ENCODE measurements at regions of chr5 and their contacts with region 1.

Region 1: DNA sequence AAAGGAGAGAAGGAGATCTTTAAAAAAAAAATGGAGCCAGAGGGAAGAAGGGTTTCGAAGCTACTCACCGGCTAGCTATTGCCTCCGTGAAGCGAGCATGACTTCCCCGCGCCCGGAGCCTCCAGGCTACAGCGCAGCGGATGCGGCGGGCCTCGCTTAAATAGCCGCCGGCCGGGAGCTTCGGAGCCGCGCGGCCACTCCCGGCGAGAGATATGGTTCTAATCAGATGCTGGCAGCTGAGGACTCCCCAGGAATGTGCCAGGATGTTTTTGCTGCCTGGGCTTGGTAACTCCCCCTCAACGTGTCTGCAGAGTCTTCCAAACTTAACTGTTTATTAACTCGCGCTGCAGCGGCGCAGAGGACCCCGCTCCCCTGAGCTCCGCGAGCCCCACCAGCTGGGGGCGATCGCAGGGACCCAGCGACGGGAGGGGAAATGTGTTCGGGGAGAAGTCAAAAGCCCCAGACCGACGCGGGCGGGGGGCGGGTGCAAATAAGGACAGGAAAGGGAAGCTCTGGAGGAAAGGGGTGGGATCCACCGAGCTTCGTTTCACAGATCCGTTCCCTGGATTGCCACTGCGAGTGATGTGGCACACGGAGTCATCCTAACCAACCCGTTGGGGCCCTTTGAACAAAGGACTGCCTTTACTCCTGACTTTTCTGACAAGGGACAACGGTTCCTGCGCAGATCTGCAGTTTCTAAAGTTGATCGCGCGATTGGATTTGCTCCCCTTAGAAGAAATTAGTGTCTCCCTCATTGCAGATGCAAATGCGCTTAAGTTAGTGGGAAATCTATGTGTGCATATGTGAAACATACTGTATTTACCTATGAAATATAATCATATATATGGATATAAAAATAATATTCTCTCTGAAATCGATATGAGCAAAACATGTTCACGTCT is at the start of gene DAB2:
- DNase-seq: peak; percentile 91 to 93
- H3K4me3 ChIP-seq: peak within 1 kb of the TSS; percentile 63
- H3K4me3 Mint-ChIP-seq: peak within 1 kb of the TSS; percentile 71
- H3K27ac Mint-ChIP-seq: peak within 1 kb of the TSS; percentile 89
- H3K4me1 ChIP-seq: peaks cover 75% of the 10 kb centered on the region
- H3K4me1 Mint-ChIP-seq: peaks cover 41% of the 10 kb centered on the region
- H3K27me3 ChIP-seq: no peaks in the 10 kb centered on the region
- H3K27me3 Mint-ChIP-seq: no peaks in the 10 kb centered on the region
- CTCF ChIP-seq: peak; percentile 52 to 86
- total RNA-seq, gene DAB2: 133 and 135 TPM in 2 replicates

Region 2: GRCh38 chr5:39376293-39376714 is 48.7 kb before region 1 on chr5:
- CTCF ChIA-PET with region 1: interaction called, 18 read pairs
- POLR2A ChIA-PET with region 1: no interaction called
- intact Hi-C with region 1: loop called (anchors 1 kb)
- DNase-seq: peak; percentile 51 to 76
- H3K4me3 ChIP-seq: no peak overlapping the region
- H3K4me3 Mint-ChIP-seq: no peak overlapping the region
- H3K27ac Mint-ChIP-seq: no peak overlapping the region
- H3K4me1 ChIP-seq: peaks cover 18% of the 10 kb centered on the region
- H3K4me1 Mint-ChIP-seq: peaks cover 13% of the 10 kb centered on the region
- H3K27me3 ChIP-seq: no peaks in the 10 kb centered on the region
- H3K27me3 Mint-ChIP-seq: no peaks in the 10 kb centered on the region
- CTCF ChIP-seq: peak; percentile 70 to 79

Region 3: DNA sequence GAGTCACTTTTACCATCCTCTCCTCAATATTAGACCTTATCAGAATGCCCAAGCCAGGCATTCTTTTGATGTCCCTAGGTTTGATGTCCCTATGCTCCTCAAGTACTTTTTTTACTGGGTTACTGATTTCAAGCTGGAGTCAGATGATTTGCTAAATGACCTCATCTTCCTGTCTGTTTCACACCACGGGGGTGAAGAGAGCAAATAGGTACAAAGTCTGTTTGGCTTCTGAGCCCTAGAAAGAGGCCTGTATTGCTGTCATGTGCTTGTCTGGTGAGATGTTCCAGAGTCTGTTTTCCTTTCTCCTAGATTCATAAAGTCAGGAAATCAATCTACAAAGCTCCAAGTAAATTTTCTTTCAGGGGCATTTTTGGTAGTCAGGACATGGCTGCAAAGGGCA is 12.5 kb after region 1 on chr5:
- CTCF ChIA-PET with region 1: interaction called, 6 read pairs
- POLR2A ChIA-PET with region 1: interaction called, 8 read pairs
- intact Hi-C with region 1: loop called (anchors 1 kb)
- DNase-seq: peak; percentile 71
- H3K4me3 ChIP-seq: no peak overlapping the region
- H3K4me3 Mint-ChIP-seq: peak overlapping the region; percentile 17
- H3K27ac Mint-ChIP-seq: peak overlapping the region; percentile 56
- H3K4me1 ChIP-seq: peaks cover 53% of the 10 kb centered on the region
- H3K4me1 Mint-ChIP-seq: peaks cover 7% of the 10 kb centered on the region
- H3K27me3 ChIP-seq: no peaks in the 10 kb centered on the region
- H3K27me3 Mint-ChIP-seq: no peaks in the 10 kb centered on the region
- CTCF ChIP-seq: no peak

Region 4: GRCh38 chr5:39520232-39520572 is 95.2 kb after region 1 on chr5:
- CTCF ChIA-PET with region 1: interaction called, 5 read pairs
- POLR2A ChIA-PET with region 1: interaction called, 12 read pairs
- intact Hi-C with region 1: loop called (anchors 5 kb)
- DNase-seq: no peak
- H3K4me3 ChIP-seq: no peak overlapping the region
- H3K4me3 Mint-ChIP-seq: no peak overlapping the region
- H3K27ac Mint-ChIP-seq: no peak overlapping the region
- H3K4me1 ChIP-seq: peaks cover 35% of the 10 kb centered on the region
- H3K4me1 Mint-ChIP-seq: peaks cover 7% of the 10 kb centered on the region
- H3K27me3 ChIP-seq: no peaks in the 10 kb centered on the region
- H3K27me3 Mint-ChIP-seq: no peaks in the 10 kb centered on the region
- CTCF ChIP-seq: no peak

Region 5: DNA sequence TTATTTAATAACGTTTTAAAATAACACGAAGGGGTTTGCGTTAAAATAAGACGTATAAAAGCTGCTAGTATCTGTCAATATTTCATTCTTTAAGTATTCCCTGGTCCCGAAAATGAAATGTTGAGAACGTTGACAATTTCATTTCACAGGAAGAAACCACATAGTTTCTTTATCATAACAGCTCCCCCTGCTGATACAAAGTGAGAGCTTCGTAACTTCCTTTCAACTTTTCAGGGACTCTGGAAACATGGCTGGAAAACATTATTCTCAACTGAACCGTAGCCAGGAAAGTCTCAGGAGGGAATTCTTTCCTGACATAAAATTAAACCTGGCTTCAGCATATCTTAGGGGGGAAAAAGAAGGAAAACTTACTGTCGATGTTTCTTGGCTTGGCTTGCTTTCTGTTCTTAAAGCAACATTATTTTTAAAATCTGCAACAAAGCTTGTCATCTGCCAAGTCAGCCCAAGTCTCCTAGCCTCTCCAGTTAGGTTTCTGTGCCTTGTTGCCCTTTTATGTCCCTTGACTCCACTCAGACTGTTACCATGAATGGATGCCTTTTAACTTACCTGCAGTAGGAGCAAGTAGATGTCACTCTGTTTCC is 122.7 kb after region 1 on chr5:
- CTCF ChIA-PET with region 1: interaction called, 31 read pairs
- POLR2A ChIA-PET with region 1: interaction called, 11 read pairs
- intact Hi-C with region 1: loop called (anchors 1 kb)
- DNase-seq: peak in 1 of 2 experiments; percentile 65
- H3K4me3 ChIP-seq: no peak overlapping the region
- H3K4me3 Mint-ChIP-seq: no peak overlapping the region
- H3K27ac Mint-ChIP-seq: no peak overlapping the region
- H3K4me1 ChIP-seq: peaks cover 12% of the 10 kb centered on the region
- H3K4me1 Mint-ChIP-seq: no peaks in the 10 kb centered on the region
- H3K27me3 ChIP-seq: no peaks in the 10 kb centered on the region
- H3K27me3 Mint-ChIP-seq: no peaks in the 10 kb centered on the region
- CTCF ChIP-seq: peak; percentile 58 to 82

Measured in Caco-2 (cell line).